CD4-positive, alpha-beta memory T cell (primary cell): ENCODE measurements at regions of chr7 and their contacts with region 1.

Region 1: GRCh38 chr7:128904381-128905197 is 5.9 kb downstream of the KCP start:
- DNase-seq: peak in 4 of 5 donors; percentile 57 to 72 (median 65)
- H3K4me3 ChIP-seq: no peak overlapping the region
- H3K4me3 Mint-ChIP-seq: peak overlapping the region in 1 of 8 donors; percentile 13
- H3K27ac ChIP-seq: no peak overlapping the region
- H3K27ac Mint-ChIP-seq: peak overlapping the region in 1 of 7 donors; percentile 22
- H3K4me1 ChIP-seq: no peaks in the 10 kb centered on the region
- H3K4me1 Mint-ChIP-seq: peaks cover 0 to 3% (median 0%) of the 10 kb centered on the region in 4 donors
- H3K27me3 ChIP-seq: no peaks in the 10 kb centered on the region
- H3K27me3 Mint-ChIP-seq: peaks cover 16 to 31% of the 10 kb centered on the region in 2 donors

Region 2: DNA sequence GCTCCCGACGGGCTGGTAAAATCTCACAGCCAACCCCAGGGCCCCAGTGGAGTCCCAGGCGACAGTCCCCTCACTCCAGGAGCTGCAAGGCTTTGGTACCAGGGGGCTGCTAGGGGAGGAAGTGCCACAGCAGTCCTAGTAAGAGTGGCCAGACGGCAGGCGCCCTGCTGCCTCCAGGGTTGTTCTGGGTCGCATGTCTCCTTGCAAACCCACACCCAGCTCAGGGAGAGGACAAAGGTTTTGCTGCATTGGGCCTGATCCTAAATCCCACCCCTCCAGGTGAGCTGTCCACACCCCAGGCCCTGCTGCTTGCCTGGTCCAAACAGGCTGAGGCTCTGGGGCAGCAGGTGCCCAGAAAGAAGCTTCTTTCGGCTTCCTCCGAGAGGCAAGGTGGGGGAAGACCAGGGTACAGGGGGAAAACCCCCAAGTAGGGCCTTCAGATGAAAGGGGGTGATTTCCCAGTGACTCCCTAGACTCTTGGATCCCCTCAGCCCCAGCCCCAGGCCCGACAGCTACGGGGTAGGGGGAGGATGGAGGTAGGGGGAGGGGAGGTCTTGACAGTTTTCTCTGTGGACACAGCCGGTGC is 10.1 kb after region 1 on chr7:
- CTCF ChIA-PET with region 1: no interaction called
- POLR2A ChIA-PET with region 1: no interaction called
- intact Hi-C with region 1: no loop called
- DNase-seq: peak in 2 of 5 donors; percentile 25 to 53
- H3K4me3 ChIP-seq: no peak overlapping the region
- H3K4me3 Mint-ChIP-seq: peak overlapping the region in 5 of 8 donors; percentile 55 to 75 (median 60)
- H3K27ac ChIP-seq: no peak overlapping the region
- H3K27ac Mint-ChIP-seq: peak overlapping the region in 1 of 7 donors; percentile 40
- H3K4me1 ChIP-seq: peaks cover 4% of the 10 kb centered on the region
- H3K4me1 Mint-ChIP-seq: peaks cover 6 to 15% (median 9%) of the 10 kb centered on the region in 4 donors
- H3K27me3 ChIP-seq: peaks cover 6% of the 10 kb centered on the region
- H3K27me3 Mint-ChIP-seq: peaks cover 31 to 34% of the 10 kb centered on the region in 2 donors

Region 3: DNA sequence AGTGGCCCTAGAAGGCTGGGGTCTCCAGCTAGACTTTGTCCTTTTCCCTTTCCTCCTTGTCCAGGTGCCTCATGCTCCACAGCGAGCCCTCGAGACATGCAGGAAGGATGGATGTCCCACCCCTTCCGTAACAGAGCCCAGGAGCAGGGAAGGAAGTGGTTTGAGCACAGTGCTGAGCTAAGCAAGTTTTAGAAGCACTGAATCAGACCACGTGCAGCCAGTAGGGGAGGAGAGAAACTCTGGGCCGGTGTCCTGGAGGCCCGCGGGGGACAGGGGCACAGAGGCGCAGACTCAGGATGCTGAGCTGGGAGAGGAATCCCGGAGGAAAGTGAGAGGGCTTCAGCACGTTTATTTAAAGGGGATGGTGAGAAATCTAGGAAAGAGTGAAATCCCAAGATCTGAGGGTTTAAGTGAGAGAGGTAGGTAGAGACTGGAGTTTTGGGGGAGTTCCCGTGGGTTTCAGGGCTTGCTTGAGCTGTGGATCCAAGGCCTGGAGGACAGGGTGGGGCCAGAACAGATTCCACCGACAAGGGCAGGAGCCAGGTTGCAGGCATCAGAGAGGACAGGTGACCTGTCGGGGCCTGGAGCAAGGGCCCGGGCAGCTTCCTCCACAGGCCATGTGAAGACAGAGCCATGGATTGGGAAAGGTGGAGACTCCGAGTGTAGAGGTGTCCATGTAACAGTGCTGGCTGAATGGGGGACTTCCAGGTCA is 28.7 kb after region 1 on chr7:
- CTCF ChIA-PET with region 1: interaction called, 4 read pairs
- POLR2A ChIA-PET with region 1: no interaction called
- intact Hi-C with region 1: loop called (anchors 1 kb)
- DNase-seq: peak; percentile 45 to 64 (median 58)
- H3K4me3 ChIP-seq: peak overlapping the region in 1 of 2 donors; percentile 26
- H3K4me3 Mint-ChIP-seq: peak overlapping the region; percentile 57 to 95 (median 88)
- H3K27ac ChIP-seq: peak overlapping the region; percentile 35
- H3K27ac Mint-ChIP-seq: peak overlapping the region; percentile 63 to 94 (median 89)
- H3K4me1 ChIP-seq: peaks cover 25% of the 10 kb centered on the region
- H3K4me1 Mint-ChIP-seq: peaks cover 15 to 41% (median 23%) of the 10 kb centered on the region in 4 donors
- H3K27me3 ChIP-seq: no peaks in the 10 kb centered on the region
- H3K27me3 Mint-ChIP-seq: peaks cover 0 to 3% of the 10 kb centered on the region in 2 donors

Region 4: GRCh38 chr7:128946923-128947830 is 42.6 kb after region 1 on chr7:
- CTCF ChIA-PET with region 1: interaction called, 11 read pairs
- POLR2A ChIA-PET with region 1: no interaction called
- intact Hi-C with region 1: loop called (anchors 2 kb)
- DNase-seq: no peak
- H3K4me3 ChIP-seq: no peak overlapping the region
- H3K4me3 Mint-ChIP-seq: peak overlapping the region in 1 of 8 donors; percentile 54
- H3K27ac ChIP-seq: no peak overlapping the region
- H3K27ac Mint-ChIP-seq: no peak overlapping the region
- H3K4me1 ChIP-seq: no peaks in the 10 kb centered on the region
- H3K4me1 Mint-ChIP-seq: peaks cover 0 to 2% (median 1%) of the 10 kb centered on the region in 4 donors
- H3K27me3 ChIP-seq: no peaks in the 10 kb centered on the region
- H3K27me3 Mint-ChIP-seq: no peaks in the 10 kb centered on the region

Region 5: GRCh38 chr7:129468087-129468486 is 563.5 kb after region 1 on chr7:
- CTCF ChIA-PET with region 1: no interaction called
- POLR2A ChIA-PET with region 1: no interaction called
- intact Hi-C with region 1: loop called (anchors 10 kb)
- DNase-seq: no peak
- H3K4me3 ChIP-seq: no peak overlapping the region
- H3K4me3 Mint-ChIP-seq: no peak overlapping the region
- H3K27ac ChIP-seq: no peak overlapping the region
- H3K27ac Mint-ChIP-seq: no peak overlapping the region
- H3K4me1 ChIP-seq: no peaks in the 10 kb centered on the region
- H3K4me1 Mint-ChIP-seq: no peaks in the 10 kb centered on the region
- H3K27me3 ChIP-seq: no peaks in the 10 kb centered on the region
- H3K27me3 Mint-ChIP-seq: no peaks in the 10 kb centered on the region